ENCODE measurements at regions of chr3 and their contacts with region 1.

Region 1: DNA sequence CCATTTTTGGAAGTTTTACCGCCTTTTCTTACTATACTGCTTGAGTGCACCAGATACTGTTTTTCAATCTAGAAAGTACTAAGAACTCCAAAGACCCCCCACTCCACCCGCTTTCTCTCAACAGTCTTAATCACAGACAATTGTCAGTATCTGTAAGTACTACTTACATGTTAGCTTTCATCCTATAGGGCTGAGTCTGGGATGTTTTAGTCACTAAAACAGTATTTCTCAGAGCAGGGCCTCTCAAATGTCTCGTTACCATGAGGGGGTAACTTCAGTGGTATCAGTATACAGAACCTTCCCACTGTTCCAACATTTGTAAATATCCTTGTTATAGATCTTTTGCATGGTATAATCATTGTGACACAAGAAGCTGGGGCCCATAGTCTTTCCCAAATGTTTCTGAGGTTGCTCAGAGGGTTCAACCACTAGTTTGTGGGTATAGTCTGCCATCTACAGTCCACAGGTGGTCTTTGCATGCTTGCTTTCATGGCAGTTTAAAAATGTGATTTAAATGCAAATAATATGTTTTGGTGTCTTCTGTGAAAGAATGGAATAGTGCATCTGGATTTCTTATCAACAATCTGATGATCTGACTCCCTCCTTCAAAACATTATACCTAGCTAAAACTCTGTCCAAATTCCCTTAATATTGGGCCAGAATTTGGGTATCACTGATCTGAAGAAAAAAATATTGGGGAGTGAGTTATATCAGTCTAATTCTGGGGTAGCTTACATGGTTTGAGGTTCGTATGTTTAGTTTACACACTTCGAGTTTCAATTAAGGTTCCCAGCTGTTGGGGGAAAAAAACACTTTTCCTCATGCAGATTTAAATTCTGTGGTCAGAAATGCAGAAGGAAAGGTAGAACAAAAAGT is 18.0 kb upstream of the DNAJC13 start:
- DNase-seq: peak; percentile 65
- H3K4me3 ChIP-seq: no peak overlapping the region
- H3K27ac ChIP-seq: no peak overlapping the region
- H3K4me1 ChIP-seq: no peaks in the 10 kb centered on the region
- CTCF ChIP-seq: peak; percentile 98

Region 2: GRCh38 chr3:131794766-131795388 is 604.4 kb before region 1 on chr3:
- CTCF ChIA-PET with region 1: no interaction called
- POLR2A ChIA-PET with region 1: no interaction called
- intact Hi-C with region 1: loop called (anchors 5 kb)
- DNase-seq: peak; percentile 41
- H3K4me3 ChIP-seq: no peak overlapping the region
- H3K27ac ChIP-seq: no peak overlapping the region
- H3K4me1 ChIP-seq: no peaks in the 10 kb centered on the region
- CTCF ChIP-seq: peak; percentile 83

Region 3: DNA sequence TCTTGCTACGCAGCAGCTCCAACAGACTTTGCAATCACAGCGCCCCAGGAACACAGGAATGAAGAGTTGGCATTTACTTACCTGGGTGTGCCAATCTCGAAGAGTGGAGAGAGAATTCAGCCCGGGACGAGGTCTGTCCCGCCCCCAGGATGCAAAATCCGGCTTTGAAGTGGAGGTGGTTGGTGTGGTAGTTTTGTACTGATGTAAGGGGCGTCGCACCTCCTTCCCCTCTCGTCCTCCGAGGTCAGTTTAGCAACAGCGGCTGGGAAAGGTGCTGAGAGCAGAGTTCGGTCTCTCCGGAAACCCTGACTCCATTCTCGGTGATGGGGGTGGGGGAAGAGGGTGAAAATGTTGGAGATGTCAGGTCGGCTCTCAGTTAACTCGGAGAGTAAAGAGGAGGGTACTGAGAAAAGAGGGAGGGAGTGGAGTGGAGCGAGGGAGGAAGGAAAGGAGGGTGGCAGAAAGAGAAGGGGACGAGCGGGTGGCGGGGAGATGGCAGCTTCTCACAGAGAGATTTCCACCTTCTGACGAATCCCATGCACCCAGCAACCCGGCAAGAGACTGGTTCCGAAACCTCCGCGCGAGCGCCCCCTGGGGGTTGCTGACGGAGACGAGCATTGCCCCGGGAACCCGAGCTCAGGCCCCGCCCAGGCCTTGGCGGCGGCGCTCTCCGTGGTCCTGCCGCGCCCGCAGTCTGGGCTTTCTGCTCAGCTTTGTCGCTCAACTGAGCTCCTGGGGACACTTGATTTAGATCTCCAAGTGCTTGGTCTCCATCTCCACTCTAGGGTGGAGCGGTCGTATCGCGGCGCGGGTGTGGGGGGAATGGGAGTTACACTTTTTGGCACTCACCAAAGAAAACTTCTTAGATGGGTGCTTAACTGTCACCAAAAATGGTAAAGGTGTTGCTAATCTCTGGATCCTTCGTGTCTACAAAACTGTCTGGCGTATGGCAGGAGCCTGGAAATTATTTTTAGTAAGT is 364.5 kb before region 1 on chr3 and contains the start of gene CPNE4:
- CTCF ChIA-PET with region 1: no interaction called
- POLR2A ChIA-PET with region 1: no interaction called
- intact Hi-C with region 1: loop called (anchors 1 kb)
- DNase-seq: peak; percentile 67
- H3K4me3 ChIP-seq: no peak within 1 kb of the TSS
- H3K27ac ChIP-seq: no peak within 1 kb of the TSS
- H3K4me1 ChIP-seq: no peaks in the 10 kb centered on the region
- CTCF ChIP-seq: peak; percentile 82
- total RNA-seq, gene CPNE4: not detected in 2 replicates

Region 4: GRCh38 chr3:132253262-132253878 is 145.9 kb before region 1 on chr3:
- CTCF ChIA-PET with region 1: no interaction called
- POLR2A ChIA-PET with region 1: interaction called, 3 read pairs
- intact Hi-C with region 1: loop called (anchors 1 kb)
- DNase-seq: peak; percentile 65
- H3K4me3 ChIP-seq: no peak overlapping the region
- H3K27ac ChIP-seq: no peak overlapping the region
- H3K4me1 ChIP-seq: no peaks in the 10 kb centered on the region
- CTCF ChIP-seq: peak; percentile 89